Mammary epithelial cell (primary cell): ENCODE measurements at regions of chr18 and their contacts with region 1.

Region 1: DNA sequence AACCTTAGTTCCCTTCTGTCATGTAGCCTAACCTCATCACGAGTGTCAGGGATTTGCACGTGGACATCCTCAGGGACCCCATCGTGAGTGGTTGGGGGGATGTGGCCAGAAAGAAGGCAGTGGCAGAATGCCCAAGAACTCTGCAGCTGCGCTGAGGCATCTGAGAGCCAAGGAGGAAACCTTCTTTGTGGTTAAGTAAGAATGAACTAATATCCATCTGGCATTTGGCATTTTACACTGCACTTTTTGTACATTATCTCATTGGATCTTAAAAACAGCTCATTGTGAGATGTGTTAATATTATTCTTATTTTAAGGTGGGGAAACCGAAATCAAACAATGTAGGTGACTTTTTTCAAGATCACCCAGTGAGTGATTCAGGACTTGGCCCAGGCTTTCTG is 32.6 kb upstream of the APCDD1 start:
- DNase-seq: peak; percentile 89
- H3K4me3 ChIP-seq: no peak overlapping the region
- H3K27ac ChIP-seq: peak overlapping the region; percentile 97
- H3K4me1 ChIP-seq: peaks cover 57% of the 10 kb centered on the region
- H3K27me3 ChIP-seq: no peaks in the 10 kb centered on the region
- CTCF ChIP-seq: no peak

Region 2: DNA sequence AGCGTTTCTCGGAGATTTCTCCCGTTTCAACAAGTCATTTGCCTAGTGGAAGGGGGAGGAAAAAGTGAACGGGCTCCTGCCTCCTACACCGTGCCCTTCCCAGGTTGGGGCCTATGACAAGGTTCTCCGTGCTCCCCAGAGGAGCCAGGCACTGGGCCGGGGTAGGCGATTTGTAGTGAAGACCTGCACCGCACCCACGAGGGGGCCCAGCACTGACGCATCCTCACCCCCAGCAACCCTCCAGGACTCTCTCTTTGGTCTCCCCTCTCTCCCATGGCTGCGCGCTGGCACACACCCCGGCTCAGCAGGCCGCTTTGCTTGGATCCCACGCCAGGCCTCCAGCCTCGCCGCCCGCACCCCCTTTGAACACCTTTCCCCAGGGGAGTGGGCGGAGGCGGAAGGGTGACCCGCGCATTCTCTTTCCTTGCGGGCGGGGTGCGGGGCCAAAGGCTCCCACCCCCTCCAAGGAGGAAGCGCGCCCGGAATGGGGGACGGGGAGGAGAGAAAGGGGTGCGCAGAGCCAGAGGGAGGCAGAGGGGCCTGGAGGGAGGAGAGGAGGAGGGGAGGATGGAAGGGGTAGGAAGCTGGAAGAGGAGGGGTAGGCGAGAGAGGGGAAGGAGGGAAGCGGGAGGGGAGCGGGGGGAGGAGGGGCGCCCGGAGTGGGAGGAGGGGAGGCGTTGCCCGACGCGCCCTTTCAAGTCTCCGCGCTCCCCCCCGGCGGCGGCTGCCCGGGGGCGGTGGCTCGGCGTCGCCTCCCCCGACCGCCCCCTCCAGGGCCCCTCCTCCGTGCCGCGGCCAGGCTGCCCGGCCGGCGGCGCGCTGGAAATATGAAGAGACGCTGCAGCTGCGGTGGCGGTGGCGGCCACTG is 32.2 kb after region 1 on chr18 and contains the start of gene APCDD1:
- CTCF ChIA-PET with region 1: no interaction called
- dilution Hi-C with region 1: no loop called
- in situ Hi-C with region 1: no loop called
- intact Hi-C with region 1: loop called (anchors 2 kb)
- DNase-seq: peak; percentile 11
- H3K4me3 ChIP-seq: peak within 1 kb of the TSS; percentile 36 to 52 (median 48)
- H3K27ac ChIP-seq: no peak within 1 kb of the TSS
- H3K4me1 ChIP-seq: peaks cover 7% of the 10 kb centered on the region
- H3K27me3 ChIP-seq: peaks cover 23% of the 10 kb centered on the region
- CTCF ChIP-seq: no peak
- total RNA-seq, gene APCDD1: 9.7 to 24.8 TPM

Region 3: DNA sequence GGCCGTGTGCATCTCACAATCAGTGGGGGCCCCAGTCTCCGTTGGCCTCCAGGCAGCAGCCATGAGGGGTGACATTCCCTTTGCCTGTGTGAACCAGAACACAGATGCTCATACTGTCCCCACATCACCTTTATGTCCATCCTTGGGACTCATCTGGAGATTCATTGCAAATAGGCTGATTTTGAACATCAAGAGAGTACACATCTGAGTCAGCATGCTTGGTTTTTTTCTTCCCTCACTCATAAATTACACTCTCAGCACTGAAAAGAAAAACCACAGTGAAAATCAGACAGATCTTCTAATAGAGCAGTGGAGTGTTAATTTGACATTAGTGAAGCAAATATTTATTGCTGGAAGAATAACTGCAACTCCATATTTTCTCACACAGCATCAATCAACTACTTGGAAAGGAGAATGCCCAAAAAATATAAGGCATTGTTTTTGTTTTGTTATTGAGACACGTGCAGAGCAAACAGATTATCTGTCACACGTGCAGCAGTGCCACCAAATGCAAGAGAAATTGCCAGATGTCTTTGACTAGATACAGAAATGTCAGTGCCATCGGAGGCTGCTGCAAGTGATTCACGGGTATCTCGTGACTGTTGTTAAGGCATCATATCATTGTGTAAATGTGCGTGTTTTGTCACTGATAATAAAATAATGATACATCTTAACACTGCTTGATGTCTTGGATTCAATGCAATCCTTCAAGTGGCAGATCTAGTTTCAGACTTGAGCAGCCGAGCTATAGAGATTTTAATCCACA is 43.5 kb after region 1 on chr18:
- CTCF ChIA-PET with region 1: no interaction called
- dilution Hi-C with region 1: no loop called
- in situ Hi-C with region 1: no loop called
- intact Hi-C with region 1: no loop called
- DNase-seq: no peak
- H3K4me3 ChIP-seq: no peak overlapping the region
- H3K27ac ChIP-seq: no peak overlapping the region
- H3K4me1 ChIP-seq: no peaks in the 10 kb centered on the region
- H3K27me3 ChIP-seq: no peaks in the 10 kb centered on the region
- CTCF ChIP-seq: no peak

Region 4: DNA sequence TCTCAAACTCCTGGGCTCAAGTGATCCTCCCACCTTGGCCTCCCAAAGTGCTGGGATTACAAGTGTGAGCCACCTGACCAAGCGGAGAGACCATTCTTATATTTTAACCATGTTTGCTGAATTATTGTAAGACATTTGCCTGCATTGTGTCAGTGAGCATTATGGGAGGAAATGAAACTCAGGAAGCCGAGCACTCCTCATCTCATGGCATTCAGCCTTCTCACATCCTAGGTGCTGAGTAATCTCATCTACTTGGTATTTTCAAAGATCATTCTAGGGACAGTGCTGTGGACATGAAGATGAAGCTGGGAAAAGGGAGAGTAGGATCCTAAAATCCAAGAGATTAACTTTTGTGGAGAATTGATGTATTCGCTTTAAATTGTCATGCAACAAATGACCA is 170.0 kb after region 1 on chr18:
- CTCF ChIA-PET with region 1: no interaction called
- dilution Hi-C with region 1: no loop called
- in situ Hi-C with region 1: no loop called
- intact Hi-C with region 1: no loop called
- DNase-seq: no peak
- H3K4me3 ChIP-seq: no peak overlapping the region
- H3K27ac ChIP-seq: no peak overlapping the region
- H3K4me1 ChIP-seq: no peaks in the 10 kb centered on the region
- H3K27me3 ChIP-seq: no peaks in the 10 kb centered on the region
- CTCF ChIP-seq: no peak

Region 5: GRCh38 chr18:10660179-10660884 is 238.5 kb after region 1 on chr18:
- CTCF ChIA-PET with region 1: no interaction called
- dilution Hi-C with region 1: no loop called
- in situ Hi-C with region 1: no loop called
- intact Hi-C with region 1: no loop called
- DNase-seq: no peak
- H3K4me3 ChIP-seq: no peak overlapping the region
- H3K27ac ChIP-seq: no peak overlapping the region
- H3K4me1 ChIP-seq: no peaks in the 10 kb centered on the region
- H3K27me3 ChIP-seq: no peaks in the 10 kb centered on the region
- CTCF ChIP-seq: no peak